ENCODE measurements at regions of chr16 and their contacts with region 1.

Region 1: GRCh38 chr16:3150346-3151218 is 15.8 kb downstream of the ZNF213 start:
- DNase-seq: peak; percentile 94 to 97 (median 97)
- H3K4me3 ChIP-seq: peak overlapping the region; percentile 43 to 94 (median 79)
- H3K27ac ChIP-seq: peak overlapping the region in 1 of 2 experiments; percentile 71
- H3K4me1 ChIP-seq: peaks cover 0 to 23% (median 16%) of the 10 kb centered on the region in 4 experiments
- H3K27me3 ChIP-seq: no peaks in the 10 kb centered on the region

Region 2: GRCh38 chr16:2614761-2615191 is 535.8 kb before region 1 on chr16:
- CTCF ChIA-PET with region 1: no interaction called
- POLR2A ChIA-PET with region 1: no interaction called
- DNase-seq: no peak
- H3K4me3 ChIP-seq: no peak overlapping the region
- H3K27ac ChIP-seq: no peak overlapping the region
- H3K4me1 ChIP-seq: no peaks in the 10 kb centered on the region
- H3K27me3 ChIP-seq: no peaks in the 10 kb centered on the region

Region 3: GRCh38 chr16:3134564-3135417 is 15.8 kb before region 1 on chr16 and contains the start of gene ZNF213:
- CTCF ChIA-PET with region 1: interaction called, 121 read pairs
- POLR2A ChIA-PET with region 1: interaction called, 12 read pairs
- DNase-seq: peak; percentile 98 to 99 (median 99)
- H3K4me3 ChIP-seq: peak within 1 kb of the TSS; percentile 56 to 99 (median 98)
- H3K27ac ChIP-seq: peak within 1 kb of the TSS; percentile 91 to 96
- H3K4me1 ChIP-seq: peaks cover 4 to 27% (median 17%) of the 10 kb centered on the region in 4 experiments
- H3K27me3 ChIP-seq: no peaks in the 10 kb centered on the region

Region 4: DNA sequence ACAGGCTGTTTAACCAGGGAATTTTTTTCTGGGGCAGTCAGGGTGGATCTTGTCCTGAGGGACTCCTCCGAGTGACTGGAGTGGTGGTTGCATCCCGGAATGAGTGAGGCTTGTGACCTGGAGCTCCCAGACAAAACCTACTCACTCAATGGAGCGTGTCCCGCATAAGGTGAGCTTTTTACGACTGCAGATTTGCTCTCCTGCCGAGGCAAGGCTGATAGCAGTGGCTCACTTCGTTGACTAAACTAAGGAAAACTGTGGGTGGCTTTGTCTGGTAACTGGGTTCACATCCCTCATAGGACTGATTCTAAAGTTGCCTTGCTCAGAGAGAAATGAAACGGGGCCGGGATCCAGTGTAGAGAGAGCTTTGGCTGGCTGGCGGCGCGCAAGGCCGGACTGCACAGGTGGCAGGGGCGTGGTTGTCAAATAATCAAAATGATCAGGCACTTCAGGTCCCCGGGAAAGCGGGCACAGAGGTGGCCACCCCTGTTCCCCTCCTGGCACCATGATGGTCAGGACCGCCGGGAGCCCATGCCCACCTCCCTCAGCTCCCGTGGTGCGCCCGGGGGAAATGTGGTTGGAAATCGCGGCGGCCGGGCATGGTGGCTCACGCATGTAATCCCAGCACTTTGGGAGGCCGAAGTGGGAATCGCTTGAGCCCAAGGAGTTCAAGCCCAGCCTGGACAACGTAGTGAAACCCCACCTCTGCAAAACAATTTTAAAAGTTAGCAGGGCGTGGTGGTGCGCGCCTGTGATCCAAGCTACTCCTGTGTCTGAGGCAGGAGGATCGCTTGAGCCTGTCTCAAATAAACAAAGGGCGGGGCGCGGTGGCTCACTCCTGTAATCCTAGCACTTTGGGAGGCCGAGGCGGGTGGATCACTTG is 10.8 kb after region 1 on chr16:
- CTCF ChIA-PET with region 1: interaction called, 12 read pairs
- POLR2A ChIA-PET with region 1: interaction called, 3 read pairs
- DNase-seq: no peak
- H3K4me3 ChIP-seq: no peak overlapping the region
- H3K27ac ChIP-seq: no peak overlapping the region
- H3K4me1 ChIP-seq: peaks cover 0 to 40% (median 32%) of the 10 kb centered on the region in 4 experiments
- H3K27me3 ChIP-seq: peaks cover 0 to 5% (median 0%) of the 10 kb centered on the region in 5 experiments

Region 5: DNA sequence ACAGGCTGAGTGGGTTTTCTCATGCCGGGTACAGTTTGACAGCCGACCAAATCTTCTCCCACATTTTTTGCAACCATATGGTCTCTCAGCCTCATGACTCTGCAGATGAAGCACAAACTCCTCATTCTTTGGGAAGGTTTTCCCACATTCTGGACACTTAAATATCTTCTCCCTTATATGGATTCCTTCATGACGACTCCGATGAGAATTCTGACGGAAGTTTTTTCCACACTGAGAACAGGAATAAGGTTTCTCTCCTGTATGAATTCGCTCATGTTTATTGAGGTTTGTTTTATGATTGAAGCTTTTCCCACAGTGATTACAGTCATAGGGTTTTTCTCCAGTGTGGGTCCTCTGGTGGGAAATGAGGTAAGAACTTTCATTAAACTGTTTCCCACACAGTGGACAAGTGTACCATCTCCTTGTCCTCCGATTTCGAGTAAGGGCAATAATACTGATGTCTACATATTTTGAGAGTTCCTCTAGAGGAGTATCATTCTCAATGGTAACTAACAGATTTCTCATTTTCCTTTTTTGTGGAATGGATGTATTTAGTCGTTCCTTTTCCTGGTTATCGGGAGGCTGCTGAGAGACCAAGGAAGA is 73.4 kb after region 1 on chr16:
- CTCF ChIA-PET with region 1: no interaction called
- POLR2A ChIA-PET with region 1: no interaction called
- DNase-seq: peak in 1 of 3 donors; percentile 13
- H3K4me3 ChIP-seq: no peak overlapping the region
- H3K27ac ChIP-seq: no peak overlapping the region
- H3K4me1 ChIP-seq: no peaks in the 10 kb centered on the region
- H3K27me3 ChIP-seq: no peaks in the 10 kb centered on the region